K562 (cell line): ENCODE measurements at regions of chr5 and their contacts with region 1.

Region 1: DNA sequence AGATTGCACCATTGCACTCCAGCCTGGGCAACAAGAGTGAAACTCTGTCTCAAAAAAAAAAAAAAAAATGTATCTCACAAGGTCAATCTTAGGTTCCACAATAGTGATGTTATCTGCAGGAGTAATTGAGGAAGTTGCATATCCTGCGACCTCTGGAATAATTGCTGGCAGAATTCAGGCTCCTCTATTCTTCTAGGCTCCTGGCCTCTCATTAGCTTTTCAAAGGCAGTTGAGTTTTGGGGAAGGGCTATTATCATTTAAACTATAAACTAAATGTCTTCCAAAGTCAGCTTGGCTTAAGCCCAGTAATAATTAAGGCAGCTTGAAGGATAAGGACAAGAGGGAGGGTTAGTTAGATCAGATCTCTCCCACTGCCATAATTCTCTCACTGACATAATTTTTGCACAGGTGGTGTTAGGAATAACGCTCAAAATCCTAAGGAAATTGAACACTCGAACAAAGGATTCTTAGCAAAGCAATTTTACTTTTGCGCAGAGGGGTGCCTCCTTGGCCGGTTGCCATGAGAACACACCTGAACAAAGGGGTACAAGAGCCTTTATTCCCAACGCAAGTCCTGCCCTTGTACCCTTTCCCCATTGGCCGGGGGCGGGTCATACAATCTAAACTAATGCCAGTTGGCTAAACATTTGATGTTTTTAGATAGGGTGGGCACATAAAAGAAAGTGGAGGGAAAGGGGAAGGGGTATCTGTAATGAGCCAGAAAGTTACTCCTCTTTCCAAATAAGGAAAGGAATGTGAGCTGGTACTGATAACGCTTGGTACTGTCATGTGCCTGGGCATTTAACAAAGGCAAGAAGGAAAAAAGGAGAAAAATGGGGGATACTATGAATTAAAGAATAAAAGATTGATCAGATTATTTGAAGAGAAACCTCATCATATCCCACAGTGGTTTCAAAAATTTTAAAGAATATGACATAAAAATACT is 106.4 kb upstream of the CCNG1 start:
- DNase-seq: no peak
- ATAC-seq: no peak
- H3K4me3 ChIP-seq: no peak overlapping the region
- H3K27ac ChIP-seq: no peak overlapping the region
- H3K4me1 ChIP-seq: no peaks in the 10 kb centered on the region
- H3K27me3 ChIP-seq: no peaks in the 10 kb centered on the region
- CTCF ChIP-seq: no peak
- EP300 ChIP-seq: no peak
- POLR2A ChIP-seq: no peak
- RAD21 ChIP-seq: no peak

Region 2: GRCh38 chr5:163318707-163319106 is 12.3 kb before region 1 on chr5:
- CTCF ChIA-PET with region 1: no interaction called
- POLR2A ChIA-PET with region 1: no interaction called
- in situ Hi-C with region 1: no loop called
- intact Hi-C with region 1: loop called (anchors 1 kb)
- DNase-seq: no peak
- ATAC-seq: no peak
- H3K4me3 ChIP-seq: no peak overlapping the region
- H3K27ac ChIP-seq: no peak overlapping the region
- H3K4me1 ChIP-seq: no peaks in the 10 kb centered on the region
- H3K27me3 ChIP-seq: no peaks in the 10 kb centered on the region
- CTCF ChIP-seq: no peak
- EP300 ChIP-seq: no peak
- POLR2A ChIP-seq: no peak
- RAD21 ChIP-seq: no peak

Region 3: DNA sequence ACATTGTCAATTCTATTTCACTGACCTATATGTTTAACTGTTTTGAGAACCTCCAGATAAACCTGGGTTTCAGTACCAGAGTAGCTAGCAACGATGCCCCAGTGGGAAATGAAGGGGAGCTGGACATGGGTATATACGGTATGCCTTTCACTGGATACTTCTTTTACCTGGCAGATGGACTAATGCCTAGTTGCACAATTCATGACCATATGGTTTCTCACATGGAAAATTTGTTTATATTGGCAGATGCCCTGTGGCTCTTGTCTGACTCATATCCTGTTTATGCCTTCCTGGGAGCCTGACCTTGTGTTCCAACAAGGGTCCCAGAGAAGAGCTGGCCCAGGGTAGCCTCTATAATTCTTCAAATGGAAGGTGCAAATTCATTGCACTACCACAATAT is 318.5 kb after region 1 on chr5:
- CTCF ChIA-PET with region 1: no interaction called
- POLR2A ChIA-PET with region 1: no interaction called
- in situ Hi-C with region 1: no loop called
- intact Hi-C with region 1: no loop called
- DNase-seq: no peak
- ATAC-seq: no peak
- H3K4me3 ChIP-seq: no peak overlapping the region
- H3K27ac ChIP-seq: no peak overlapping the region
- H3K4me1 ChIP-seq: no peaks in the 10 kb centered on the region
- H3K27me3 ChIP-seq: no peaks in the 10 kb centered on the region
- CTCF ChIP-seq: no peak
- EP300 ChIP-seq: no peak
- POLR2A ChIP-seq: no peak
- RAD21 ChIP-seq: no peak